Ascending aorta (tissue), 2 donors: ENCODE measurements at regions of chr4 and their contacts with region 1.

Region 1: DNA sequence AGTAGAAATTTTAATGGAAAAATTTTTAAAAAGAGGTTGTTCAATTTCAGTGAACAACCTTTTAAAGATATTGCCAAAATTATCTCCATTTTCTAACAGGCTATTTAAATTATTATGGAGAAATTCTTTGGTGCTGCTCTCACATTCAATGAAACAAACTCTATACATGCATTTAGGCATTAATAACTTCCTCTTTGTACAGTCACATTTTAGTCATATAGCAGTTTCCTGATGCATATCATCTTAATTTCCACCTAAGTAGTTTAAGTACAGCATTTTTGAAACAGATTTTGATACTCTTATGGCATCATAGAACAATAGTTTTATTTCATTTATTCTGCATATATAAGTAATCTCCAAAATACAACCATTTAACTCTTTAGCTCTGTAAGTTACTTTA is 500.1 kb downstream of the STPG2 start:
- DNase-seq: no peak
- H3K4me3 ChIP-seq: no peak overlapping the region
- H3K27ac ChIP-seq: no peak overlapping the region
- H3K4me1 ChIP-seq: no peaks in the 10 kb centered on the region
- H3K27me3 ChIP-seq: no peaks in the 10 kb centered on the region
- CTCF ChIP-seq: no peak

Region 2: DNA sequence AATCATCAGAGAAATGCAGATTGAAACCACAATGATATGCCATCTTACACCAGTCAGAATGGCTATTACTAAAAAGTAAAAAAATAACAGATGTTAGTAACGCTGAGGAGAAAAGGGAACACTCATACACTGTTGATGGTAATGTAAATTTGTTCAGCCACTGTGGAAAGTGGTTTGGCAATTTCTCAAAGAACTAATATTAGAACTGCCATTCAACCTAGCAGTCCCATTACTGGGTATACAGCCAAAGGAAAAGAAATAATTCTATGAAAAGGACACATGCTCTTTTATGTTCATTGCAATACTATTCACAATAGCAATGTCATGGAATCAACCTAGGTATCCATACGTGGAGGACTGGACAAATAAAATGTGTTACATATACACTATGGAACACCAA is 66.2 kb before region 1 on chr4:
- intact Hi-C with region 1: loop called (anchors 2 kb)
- DNase-seq: no peak
- H3K4me3 ChIP-seq: no peak overlapping the region
- H3K27ac ChIP-seq: no peak overlapping the region
- H3K4me1 ChIP-seq: no peaks in the 10 kb centered on the region
- H3K27me3 ChIP-seq: no peaks in the 10 kb centered on the region
- CTCF ChIP-seq: no peak

Region 3: GRCh38 chr4:97778174-97778573 is 135.0 kb after region 1 on chr4:
- intact Hi-C with region 1: no loop called
- DNase-seq: no peak
- H3K4me3 ChIP-seq: no peak overlapping the region
- H3K27ac ChIP-seq: no peak overlapping the region
- H3K4me1 ChIP-seq: no peaks in the 10 kb centered on the region
- H3K27me3 ChIP-seq: no peaks in the 10 kb centered on the region
- CTCF ChIP-seq: no peak